ENCODE measurements at regions of chr1 and their contacts with region 1.

Region 1: GRCh38 chr1:210246447-210246846 is 13.9 kb downstream of the SERTAD4 start:
- DNase-seq: no peak
- H3K4me3 Mint-ChIP-seq: no peak overlapping the region
- H3K27ac Mint-ChIP-seq: no peak overlapping the region
- H3K4me1 Mint-ChIP-seq: peaks cover 10% of the 10 kb centered on the region
- H3K27me3 Mint-ChIP-seq: peaks cover 75% of the 10 kb centered on the region

Region 2: DNA sequence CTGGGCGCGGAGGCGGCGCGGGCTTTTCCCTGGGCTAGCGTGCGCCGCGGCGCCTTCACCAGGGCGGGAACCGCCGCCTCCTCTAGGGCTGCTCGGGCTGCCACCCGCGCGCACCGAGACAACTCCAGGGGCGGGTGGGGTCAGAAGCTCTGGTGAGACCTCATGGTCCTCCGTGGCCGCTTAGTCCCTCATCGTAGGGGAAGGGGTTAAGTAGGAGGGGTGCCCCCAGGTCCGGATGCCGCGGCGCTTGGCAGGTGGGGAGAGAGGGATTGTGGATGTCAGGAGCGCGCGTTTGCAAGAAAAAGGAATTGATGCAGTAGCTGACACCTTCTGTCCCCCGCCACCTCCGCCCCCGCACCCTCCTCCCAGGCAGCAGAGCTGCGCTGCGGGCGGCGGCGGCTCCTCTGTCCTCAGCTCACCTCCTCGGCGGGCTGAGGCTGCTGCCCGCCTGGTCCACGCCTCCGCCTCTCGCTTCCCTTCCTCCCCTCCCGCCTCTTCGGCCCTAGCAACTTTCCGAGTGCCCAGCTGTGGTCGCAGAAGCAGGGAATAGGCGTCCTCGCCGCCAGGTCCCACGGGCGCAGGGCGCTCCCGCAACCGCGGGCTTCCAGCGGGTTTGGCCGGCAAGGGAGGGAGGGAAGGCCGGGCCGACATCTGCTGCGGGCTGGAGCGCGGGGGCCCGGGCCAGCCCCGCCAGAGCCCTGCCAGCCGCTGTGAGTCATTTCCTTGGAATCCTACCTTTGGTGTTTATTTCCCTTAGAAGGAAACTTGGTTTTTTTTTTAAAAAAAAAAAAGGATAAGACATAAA is 13.0 kb before region 1 on chr1:
- intact Hi-C with region 1: loop called (anchors 2 kb)
- DNase-seq: no peak
- H3K4me3 Mint-ChIP-seq: peak overlapping the region; percentile 47
- H3K27ac Mint-ChIP-seq: no peak overlapping the region
- H3K4me1 Mint-ChIP-seq: peaks cover 5% of the 10 kb centered on the region
- H3K27me3 Mint-ChIP-seq: peaks cover 61% of the 10 kb centered on the region